Mammary epithelial cell (primary cell): ENCODE measurements at regions of chr21 and their contacts with region 1.

Region 1: GRCh38 chr21:45820171-45821091 is 161.1 kb upstream of the COL6A1 start:
- DNase-seq: peak; percentile 63
- H3K4me3 ChIP-seq: no peak overlapping the region
- H3K27ac ChIP-seq: no peak overlapping the region
- H3K4me1 ChIP-seq: peaks cover 19% of the 10 kb centered on the region
- H3K27me3 ChIP-seq: no peaks in the 10 kb centered on the region
- CTCF ChIP-seq: peak; percentile 77 to 90

Region 2: DNA sequence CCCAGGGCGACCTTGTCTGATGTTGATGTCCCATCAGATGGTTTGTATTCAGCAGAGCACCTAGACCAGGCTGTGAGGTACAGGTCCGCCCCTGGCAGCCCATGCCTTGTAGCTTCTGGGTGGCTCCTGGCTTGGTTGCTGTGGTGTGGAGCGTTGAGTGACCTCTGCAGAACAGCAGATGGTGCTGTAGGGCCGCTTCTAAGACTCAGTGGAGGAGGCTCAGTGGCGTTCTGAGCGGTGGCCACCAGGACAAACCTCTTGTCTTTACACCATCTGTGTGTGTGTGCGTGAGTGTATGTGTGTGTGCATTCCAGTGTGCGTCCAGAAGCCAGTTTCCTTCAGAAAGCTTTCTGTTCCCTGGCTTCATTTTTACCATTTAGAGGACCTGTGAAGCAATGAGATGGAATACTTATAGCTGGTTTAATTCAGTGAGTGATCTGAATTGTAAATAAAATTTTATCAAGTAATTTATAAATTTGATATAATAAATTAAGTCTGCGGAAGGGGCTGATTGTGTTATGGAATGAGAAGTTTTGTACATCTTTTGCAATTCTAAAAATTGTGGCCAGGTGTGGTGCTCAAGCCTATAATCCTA is 680.0 kb before region 1 on chr21:
- CTCF ChIA-PET with region 1: interaction called, 3 read pairs
- dilution Hi-C with region 1: no loop called
- in situ Hi-C with region 1: no loop called
- intact Hi-C with region 1: loop called (anchors 1 kb)
- DNase-seq: peak; percentile 70
- H3K4me3 ChIP-seq: no peak overlapping the region
- H3K27ac ChIP-seq: no peak overlapping the region
- H3K4me1 ChIP-seq: peaks cover 12% of the 10 kb centered on the region
- H3K27me3 ChIP-seq: no peaks in the 10 kb centered on the region
- CTCF ChIP-seq: peak; percentile 73 to 95

Region 3: GRCh38 chr21:45554477-45555175 is 265.8 kb before region 1 on chr21:
- CTCF ChIA-PET with region 1: no interaction called
- dilution Hi-C with region 1: no loop called
- in situ Hi-C with region 1: loop called (anchors 5 to 10 kb)
- intact Hi-C with region 1: loop called (anchors 1 kb)
- DNase-seq: peak; percentile 48
- H3K4me3 ChIP-seq: peak overlapping the region; percentile 51 to 64 (median 56)
- H3K27ac ChIP-seq: no peak overlapping the region
- H3K4me1 ChIP-seq: peaks cover 13% of the 10 kb centered on the region
- H3K27me3 ChIP-seq: no peaks in the 10 kb centered on the region
- CTCF ChIP-seq: peak; percentile 52 to 73

Region 4: GRCh38 chr21:45655124-45655523 is 165.3 kb before region 1 on chr21:
- CTCF ChIA-PET with region 1: no interaction called
- dilution Hi-C with region 1: no loop called
- in situ Hi-C with region 1: no loop called
- intact Hi-C with region 1: no loop called
- DNase-seq: no peak
- H3K4me3 ChIP-seq: no peak overlapping the region
- H3K27ac ChIP-seq: no peak overlapping the region
- H3K4me1 ChIP-seq: no peaks in the 10 kb centered on the region
- H3K27me3 ChIP-seq: no peaks in the 10 kb centered on the region
- CTCF ChIP-seq: no peak

Region 5: DNA sequence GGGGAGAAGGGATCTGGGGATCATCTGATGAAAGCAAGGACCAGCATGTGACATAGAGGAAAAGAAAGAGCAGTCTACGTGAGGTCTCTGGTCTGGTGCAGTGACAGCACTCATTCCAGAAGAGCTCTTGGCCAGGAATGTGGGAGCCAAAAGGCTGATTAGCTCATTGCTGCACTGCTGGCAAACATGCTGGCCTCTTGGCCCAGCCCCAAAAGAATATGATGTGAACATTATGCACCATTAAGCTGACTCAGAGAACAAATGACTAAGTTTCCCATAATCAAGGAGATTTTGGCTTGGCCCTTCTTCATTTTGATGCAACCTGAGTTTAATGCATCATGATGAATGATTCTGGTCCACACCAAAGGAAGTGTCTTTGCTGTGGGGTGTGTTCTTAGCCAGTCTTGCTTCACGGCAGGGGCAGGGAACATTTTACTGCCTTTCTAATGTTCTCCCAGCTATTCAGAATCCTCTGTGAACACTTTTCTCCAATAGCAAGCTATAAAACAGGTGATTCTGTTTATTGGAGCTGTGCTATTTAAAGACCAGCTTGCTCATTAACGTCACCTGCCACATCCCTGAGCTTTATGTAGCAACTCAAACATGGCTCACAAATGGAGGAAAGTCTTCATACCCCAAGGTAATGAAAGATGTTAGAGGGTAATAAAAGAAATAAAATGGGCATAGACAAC is 121.8 kb before region 1 on chr21:
- CTCF ChIA-PET with region 1: no interaction called
- dilution Hi-C with region 1: no loop called
- in situ Hi-C with region 1: no loop called
- intact Hi-C with region 1: loop called (anchors 1 kb)
- DNase-seq: peak; percentile 89
- H3K4me3 ChIP-seq: no peak overlapping the region
- H3K27ac ChIP-seq: no peak overlapping the region
- H3K4me1 ChIP-seq: peaks cover 13% of the 10 kb centered on the region
- H3K27me3 ChIP-seq: no peaks in the 10 kb centered on the region
- CTCF ChIP-seq: no peak

Region 6: GRCh38 chr21:45923146-45923545 is 102.7 kb after region 1 on chr21:
- CTCF ChIA-PET with region 1: no interaction called
- dilution Hi-C with region 1: no loop called
- in situ Hi-C with region 1: no loop called
- intact Hi-C with region 1: loop called (anchors 1 kb)
- DNase-seq: peak; percentile 44
- H3K4me3 ChIP-seq: no peak overlapping the region
- H3K27ac ChIP-seq: no peak overlapping the region
- H3K4me1 ChIP-seq: no peaks in the 10 kb centered on the region
- H3K27me3 ChIP-seq: no peaks in the 10 kb centered on the region
- CTCF ChIP-seq: peak; percentile 96 to 99